Posterior vena cava (tissue), 2 donors: ENCODE measurements at regions of chr11 and their contacts with region 1.

Region 1: GRCh38 chr11:111422494-111423249 is 43.6 kb upstream of the POU2AF1 start:
- DNase-seq: no peak

Region 2: DNA sequence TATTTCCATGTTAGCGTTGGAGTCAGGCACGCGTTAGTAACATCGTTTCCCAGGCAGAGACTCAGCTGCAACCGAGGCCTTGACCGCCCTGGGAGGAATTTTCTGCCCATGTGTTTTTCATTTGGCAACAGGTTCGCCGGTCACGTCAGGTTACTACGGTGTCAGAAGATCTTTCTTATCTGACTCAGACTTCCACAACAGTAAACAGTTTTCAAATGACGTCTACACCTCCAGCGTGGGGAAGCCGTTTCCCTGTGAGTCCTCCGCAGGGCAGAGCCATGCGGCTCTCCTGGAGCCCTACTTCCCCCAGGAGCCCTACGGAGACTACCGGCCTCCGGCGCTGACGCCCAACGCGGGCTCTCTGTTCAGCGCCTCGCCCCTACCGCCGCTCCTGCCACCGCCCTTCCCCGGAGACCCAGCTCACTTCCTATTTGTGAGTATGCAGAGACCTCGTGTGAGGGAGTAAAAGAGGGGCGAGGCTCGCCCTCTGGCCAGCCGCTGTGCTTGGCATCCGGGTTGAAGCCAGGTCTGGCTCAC is 138.7 kb before region 1 on chr11:
- intact Hi-C with region 1: loop called in 1 of 2 experiments (anchors 5 kb)
- DNase-seq: no peak

Region 3: DNA sequence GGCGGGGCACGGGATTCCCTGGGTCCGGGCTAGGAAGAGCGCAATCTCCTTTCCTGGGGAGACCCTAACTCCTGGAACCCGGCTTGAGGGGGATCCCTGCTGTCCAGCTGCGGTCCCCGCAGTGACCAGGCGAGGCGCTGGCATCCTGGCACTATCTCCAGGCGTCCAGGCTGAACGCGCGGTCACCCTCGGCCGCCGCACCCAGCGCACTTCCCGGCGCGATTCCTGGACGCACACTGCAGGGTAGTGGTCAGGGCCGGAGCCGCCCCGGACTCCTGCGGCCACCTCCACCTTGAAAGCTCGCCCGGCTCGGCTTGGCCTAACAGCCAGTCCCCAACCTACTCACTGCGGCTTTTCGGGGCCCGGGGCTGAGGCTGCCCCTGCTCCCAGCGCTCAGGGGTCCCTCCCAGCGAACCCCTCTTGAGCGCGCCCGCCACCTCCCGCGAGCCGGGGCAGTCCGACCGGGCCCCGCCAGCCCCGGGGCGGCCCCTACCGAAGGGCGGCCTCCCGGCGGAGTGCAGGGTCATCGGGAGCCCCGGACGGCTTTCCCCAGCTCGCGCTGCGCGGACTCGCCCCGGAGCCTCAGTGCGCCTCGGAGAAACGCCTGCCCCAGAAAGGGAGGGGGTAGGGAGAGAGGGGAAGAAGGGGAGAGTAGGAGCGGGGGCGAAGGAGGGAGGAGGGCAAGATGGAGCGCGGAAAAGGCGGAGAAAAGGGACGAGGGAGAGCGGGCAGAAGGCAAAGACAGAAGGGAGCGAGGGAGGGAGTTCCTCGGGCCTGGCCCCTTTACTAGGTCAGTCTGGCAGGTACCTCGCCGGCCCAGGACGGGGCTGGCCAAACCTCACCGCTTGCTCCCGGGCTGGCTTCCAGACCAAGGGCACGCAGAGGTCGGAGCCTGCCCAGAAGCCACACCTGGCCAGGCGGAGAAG is 123.3 kb before region 1 on chr11:
- intact Hi-C with region 1: loop called (anchors 5 kb)
- DNase-seq: peak; percentile 91

Region 4: GRCh38 chr11:111399187-111400031 is 23.3 kb before region 1 on chr11:
- intact Hi-C with region 1: loop called in 1 of 2 experiments (anchors 1 kb)
- DNase-seq: no peak